Left cardiac atrium (tissue), 4 donors: ENCODE measurements at regions of chr3 and their contacts with region 1.

Region 1: GRCh38 chr3:49839193-49839809 is 17.1 kb downstream of the TRAIP start:
- DNase-seq: peak; percentile 85
- ATAC-seq: peak; percentile 84 to 86

Region 2: DNA sequence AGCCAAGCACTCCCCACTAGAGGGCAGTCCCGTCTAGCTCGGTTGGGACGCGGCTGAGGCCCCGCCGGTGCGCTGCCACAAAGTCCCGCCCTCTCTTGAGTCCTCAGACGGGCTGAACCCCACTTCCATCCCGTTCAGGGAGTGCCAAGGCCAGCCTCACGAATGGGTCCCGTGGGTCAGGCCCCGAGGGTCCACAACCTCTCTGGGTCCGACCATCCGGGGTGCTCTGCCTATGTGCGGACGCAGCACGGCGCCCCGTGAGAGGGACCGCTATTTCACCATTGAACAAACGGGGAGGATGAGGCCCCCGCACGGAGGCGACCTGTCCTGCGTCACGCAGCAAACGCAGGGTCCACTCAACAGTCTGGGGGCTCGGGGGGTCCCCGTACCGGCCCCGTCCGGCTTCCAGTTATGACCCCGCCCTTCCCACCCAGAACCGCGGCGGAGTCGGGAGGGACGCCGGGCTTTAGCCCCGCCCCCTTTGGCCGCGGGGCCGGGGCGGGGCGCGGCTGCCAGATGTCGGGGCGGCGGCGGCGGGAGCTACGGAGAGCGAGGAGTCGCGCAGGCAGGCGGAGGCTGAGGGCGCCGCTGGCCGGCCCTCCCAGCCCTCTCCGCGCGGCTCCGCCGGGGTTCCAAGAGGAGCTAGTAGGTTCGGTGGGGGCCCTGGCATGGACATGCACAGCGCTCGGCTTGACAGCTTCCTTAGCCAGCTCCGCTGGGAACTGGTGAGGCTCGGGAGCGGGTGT is 36.4 kb before region 1 on chr3 and contains the start of gene INKA1:
- intact Hi-C with region 1: loop called (anchors 1 to 5 kb)
- DNase-seq: peak; percentile 93
- ATAC-seq: peak; percentile 84 to 87
- total RNA-seq, gene INKA1: 2.6 to 3.8 TPM

Region 3: GRCh38 chr3:49899815-49900214 is 60.5 kb after region 1 on chr3:
- intact Hi-C with region 1: loop called (anchors 5 to 10 kb)
- DNase-seq: no peak
- ATAC-seq: no peak

Region 4: DNA sequence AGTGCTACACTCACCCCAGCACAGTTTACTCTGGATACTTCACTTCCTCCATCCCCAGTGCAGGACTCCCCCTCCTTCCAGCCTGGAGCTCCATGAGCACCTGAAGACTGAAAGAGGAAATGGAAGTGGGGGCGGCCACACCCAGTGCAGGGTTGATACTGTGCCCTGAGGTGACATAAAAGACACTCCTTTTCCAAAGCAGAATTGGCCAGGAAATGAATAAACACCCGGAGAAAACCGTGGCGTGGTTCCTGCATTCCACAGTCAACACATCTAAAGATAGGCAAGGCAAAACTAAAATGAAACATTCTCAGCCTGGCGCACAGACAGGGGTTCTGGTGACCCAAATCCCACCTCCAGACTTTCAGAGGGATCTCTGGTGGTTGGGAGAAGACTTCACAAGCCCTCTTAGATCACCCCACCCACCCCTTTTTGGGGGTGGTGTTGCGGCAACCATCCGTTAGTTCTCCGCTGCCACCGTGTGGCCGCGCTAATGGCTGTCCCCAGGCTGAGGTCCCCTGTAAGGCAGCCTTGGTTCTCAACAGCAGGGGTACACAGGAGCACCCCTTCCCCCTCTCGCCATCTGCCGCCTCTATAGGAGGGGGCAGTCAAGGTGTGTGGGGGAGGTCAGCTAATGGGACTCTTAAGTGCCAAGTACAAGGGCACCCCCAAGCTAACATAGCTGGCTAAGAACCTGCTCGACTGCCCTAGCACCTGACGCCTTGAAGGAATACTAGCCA is 66.9 kb after region 1 on chr3:
- intact Hi-C with region 1: loop called in 1 of 2 experiments (anchors 5 kb)
- DNase-seq: peak; percentile 65
- ATAC-seq: peak; percentile 36 to 60